ENCODE measurements at regions of chrX and their contacts with region 1.

Region 1: DNA sequence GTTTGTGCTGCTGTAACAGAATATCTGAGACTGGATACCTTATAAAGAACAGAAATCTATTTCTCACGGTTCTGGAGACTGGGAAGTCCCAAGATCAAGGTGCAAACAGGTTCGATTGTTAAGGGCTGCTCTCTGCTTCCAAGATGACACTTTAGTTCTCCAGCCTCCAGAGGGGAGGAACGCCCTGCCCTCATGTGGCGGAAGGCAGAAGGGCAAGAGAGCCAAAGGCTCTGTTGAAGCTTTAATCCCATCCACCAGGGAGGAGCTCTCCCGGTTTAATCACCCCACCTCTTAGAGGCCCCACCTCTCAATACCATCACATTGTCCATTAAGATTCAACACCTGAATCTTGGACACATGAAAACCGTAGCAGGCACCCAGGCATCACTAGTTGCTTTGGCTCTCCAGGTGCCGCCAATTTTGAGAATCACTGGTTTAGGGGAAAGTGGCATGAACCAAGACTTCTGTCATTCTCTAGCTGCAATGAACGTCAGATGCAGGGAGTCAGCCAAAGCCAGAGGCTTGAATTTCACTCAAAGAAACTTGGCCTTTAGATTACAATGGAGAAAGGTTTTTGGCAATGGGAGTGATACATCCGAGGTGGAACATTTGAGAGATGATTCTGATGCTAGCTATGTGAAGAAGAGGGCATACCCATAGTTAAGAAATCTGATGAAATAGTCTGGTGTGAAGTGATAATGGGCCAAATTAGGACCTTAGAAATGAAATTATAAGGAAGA is 15.7 kb downstream of the FHL1 start:
- DNase-seq: peak; percentile 82
- ATAC-seq: peak; percentile 83
- H3K4me3 ChIP-seq: no peak overlapping the region
- H3K27ac ChIP-seq: peak overlapping the region; percentile 37; the same call in 1 of the 2 replicates
- H3K4me1 ChIP-seq: peaks cover 29% of the 10 kb centered on the region
- H3K27me3 ChIP-seq: no peaks in the 10 kb centered on the region
- CTCF ChIP-seq: peak; percentile 82

Region 2: DNA sequence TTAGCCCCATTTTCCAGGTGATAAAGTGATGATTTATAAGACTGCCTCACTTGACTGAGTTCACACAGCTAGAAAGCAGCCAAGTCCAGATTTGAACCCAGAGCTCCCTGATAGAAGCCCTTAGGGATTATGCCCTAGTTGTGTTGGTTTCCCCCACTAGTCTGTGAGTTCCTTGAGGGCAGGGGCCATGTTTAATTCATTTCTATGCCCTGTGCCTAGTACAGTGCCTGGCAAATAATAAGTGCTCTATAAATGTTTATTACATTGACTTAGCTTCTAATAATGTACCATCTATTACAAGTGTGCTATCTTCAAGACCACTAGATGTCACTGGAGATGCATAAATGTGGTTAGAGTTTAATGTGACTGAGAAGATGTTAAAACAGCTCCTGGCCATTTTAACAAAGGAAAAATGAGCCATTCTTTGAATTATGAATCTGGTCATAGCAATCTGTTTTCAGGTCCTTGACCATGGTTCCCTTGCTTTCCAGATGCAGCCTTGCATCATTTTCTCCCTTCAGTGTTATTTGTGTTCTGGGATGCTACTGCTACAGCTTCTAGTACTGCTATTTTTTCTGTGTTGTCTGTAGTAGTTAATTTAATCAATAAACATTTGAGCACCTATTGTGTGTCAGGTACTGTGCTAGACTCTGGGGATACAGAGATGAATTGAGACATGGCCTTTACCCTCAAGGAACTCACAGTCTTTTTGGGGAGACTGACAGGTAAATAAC is 134.6 kb before region 1 on chrX:
- CTCF ChIA-PET with region 1: interaction called, 36 read pairs
- POLR2A ChIA-PET with region 1: interaction called, 3 read pairs
- intact Hi-C with region 1: loop called (anchors 1 kb)
- DNase-seq: peak; percentile 80
- ATAC-seq: peak; percentile 77
- H3K4me3 ChIP-seq: no peak overlapping the region
- H3K27ac ChIP-seq: no peak overlapping the region
- H3K4me1 ChIP-seq: no peaks in the 10 kb centered on the region
- H3K27me3 ChIP-seq: no peaks in the 10 kb centered on the region
- CTCF ChIP-seq: peak; percentile 79

Region 3: GRCh38 chrX:136047969-136048368 is 115.0 kb before region 1 on chrX:
- CTCF ChIA-PET with region 1: interaction called, 3 read pairs
- POLR2A ChIA-PET with region 1: no interaction called
- intact Hi-C with region 1: loop called (anchors 5 kb)
- DNase-seq: peak; percentile 37
- ATAC-seq: no peak
- H3K4me3 ChIP-seq: peak overlapping the region; percentile 35; the same call in 1 of the 2 replicates
- H3K27ac ChIP-seq: peak overlapping the region; percentile 100
- H3K4me1 ChIP-seq: peaks cover 36% of the 10 kb centered on the region
- H3K27me3 ChIP-seq: no peaks in the 10 kb centered on the region
- CTCF ChIP-seq: no peak

Region 4: GRCh38 chrX:136200466-136200865 is 37.5 kb after region 1 on chrX:
- CTCF ChIA-PET with region 1: interaction called, 3 read pairs
- POLR2A ChIA-PET with region 1: no interaction called
- intact Hi-C with region 1: loop called (anchors 2 kb)
- DNase-seq: peak; percentile 59
- ATAC-seq: peak; percentile 63
- H3K4me3 ChIP-seq: no peak overlapping the region
- H3K27ac ChIP-seq: no peak overlapping the region
- H3K4me1 ChIP-seq: peaks cover 40% of the 10 kb centered on the region
- H3K27me3 ChIP-seq: no peaks in the 10 kb centered on the region
- CTCF ChIP-seq: peak; percentile 68

Region 5: GRCh38 chrX:136209016-136209738 is 46.2 kb after region 1 on chrX:
- CTCF ChIA-PET with region 1: interaction called, 5 read pairs
- POLR2A ChIA-PET with region 1: no interaction called
- intact Hi-C with region 1: loop called (anchors 1 kb)
- DNase-seq: peak; percentile 50
- ATAC-seq: peak; percentile 57; the same call in 1 of the 2 replicates
- H3K4me3 ChIP-seq: no peak overlapping the region
- H3K27ac ChIP-seq: no peak overlapping the region
- H3K4me1 ChIP-seq: peaks cover 15% of the 10 kb centered on the region
- H3K27me3 ChIP-seq: no peaks in the 10 kb centered on the region
- CTCF ChIP-seq: peak; percentile 69

Region 6: DNA sequence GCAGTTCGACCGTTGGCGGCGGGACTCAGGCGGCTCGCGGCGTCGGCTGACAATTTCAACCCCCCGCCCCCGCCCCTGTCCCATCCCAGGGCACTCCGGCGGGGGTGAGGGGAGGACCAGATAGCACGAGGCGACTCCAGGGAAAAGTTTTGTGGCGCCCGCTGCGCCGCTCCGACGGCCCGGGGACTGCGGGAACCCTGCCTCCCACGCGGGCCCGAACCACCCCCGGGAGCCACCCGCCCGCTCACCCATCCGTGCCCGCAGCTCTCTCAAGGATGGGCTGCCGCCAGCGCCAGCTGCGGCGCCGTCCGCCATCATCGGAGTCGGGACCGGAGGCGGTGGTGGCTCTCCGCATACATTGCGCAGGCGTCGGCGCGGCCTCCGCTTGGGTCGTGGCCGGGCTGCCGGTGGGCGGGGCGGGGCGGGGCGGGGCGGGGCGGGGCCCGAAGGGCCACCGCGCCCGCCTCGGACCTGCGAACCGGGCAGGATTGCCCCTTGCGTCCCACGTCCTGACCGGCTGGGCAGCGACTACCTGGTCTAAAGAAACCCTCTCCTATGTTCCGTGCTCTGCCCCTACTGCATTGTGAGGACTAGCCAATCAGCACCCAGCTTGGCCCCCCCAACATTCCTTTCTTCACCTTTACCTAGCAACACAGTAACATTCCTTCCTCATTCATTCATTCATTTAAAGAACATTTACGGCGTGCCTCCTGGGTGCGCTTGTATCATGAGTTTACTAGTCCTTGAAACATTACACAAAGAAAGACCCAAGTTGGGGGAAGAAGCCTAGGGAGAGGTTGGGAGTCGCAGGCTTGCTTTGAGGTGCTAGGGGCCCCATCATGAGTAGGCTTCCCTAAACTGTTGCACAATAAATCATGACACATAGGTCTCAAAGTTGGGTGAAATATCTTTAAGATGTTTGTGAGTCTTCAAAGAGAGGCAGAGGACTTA is 88.3 kb after region 1 on chrX and contains the start of gene MAP7D3:
- CTCF ChIA-PET with region 1: no interaction called
- POLR2A ChIA-PET with region 1: no interaction called
- intact Hi-C with region 1: no loop called
- DNase-seq: no peak
- ATAC-seq: no peak
- H3K4me3 ChIP-seq: no peak within 1 kb of the TSS
- H3K27ac ChIP-seq: no peak within 1 kb of the TSS
- H3K4me1 ChIP-seq: peaks cover 8% of the 10 kb centered on the region
- H3K27me3 ChIP-seq: no peaks in the 10 kb centered on the region
- CTCF ChIP-seq: no peak
- total RNA-seq, gene MAP7D3: 0.40 and 0.69 TPM in 2 replicates

Region 7: GRCh38 chrX:136268051-136269048 is 105.3 kb after region 1 on chrX:
- CTCF ChIA-PET with region 1: no interaction called
- POLR2A ChIA-PET with region 1: no interaction called
- intact Hi-C with region 1: loop called (anchors 1 kb)
- DNase-seq: peak; percentile 67
- ATAC-seq: peak; percentile 71
- H3K4me3 ChIP-seq: no peak overlapping the region
- H3K27ac ChIP-seq: no peak overlapping the region
- H3K4me1 ChIP-seq: no peaks in the 10 kb centered on the region
- H3K27me3 ChIP-seq: no peaks in the 10 kb centered on the region
- CTCF ChIP-seq: peak; percentile 87

Region 8: DNA sequence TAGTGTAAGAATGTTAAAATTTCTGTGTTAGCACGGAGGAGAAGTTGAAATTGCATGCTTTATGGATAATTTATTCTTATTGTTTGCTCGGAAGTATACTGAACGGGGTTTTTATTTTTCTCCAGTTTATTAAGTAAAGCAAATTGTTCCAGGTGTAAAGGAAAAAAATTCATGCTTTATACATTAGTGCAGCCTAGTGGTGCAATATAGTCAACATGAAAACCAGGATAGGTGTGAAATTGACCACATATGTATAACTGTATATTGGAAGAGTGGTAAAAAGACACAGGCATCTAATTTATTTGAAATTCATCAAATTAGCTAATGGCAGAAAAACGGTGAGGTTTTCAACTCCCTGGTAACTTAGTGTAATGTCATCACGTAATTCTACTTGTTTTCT is 325.7 kb after region 1 on chrX:
- CTCF ChIA-PET with region 1: no interaction called
- POLR2A ChIA-PET with region 1: no interaction called
- intact Hi-C with region 1: loop called (anchors 5 kb)
- DNase-seq: peak; percentile 42
- ATAC-seq: peak; percentile 49; the same call in 1 of the 2 replicates
- H3K4me3 ChIP-seq: 0 out of 2 replicates have a peak overlapping the region, but pooled peaks have one; percentile 18
- H3K27ac ChIP-seq: no peak overlapping the region
- H3K4me1 ChIP-seq: 0 out of 2 replicates have a peak, but pooled peaks cover 5% of the 10 kb centered on the region
- H3K27me3 ChIP-seq: no peaks in the 10 kb centered on the region; the same call in 1 of the 2 replicates
- CTCF ChIP-seq: peak; percentile 55

Measured in PC-3 (cell line).